ENCODE measurements at regions of chr20 and their contacts with region 1.

Region 1: DNA sequence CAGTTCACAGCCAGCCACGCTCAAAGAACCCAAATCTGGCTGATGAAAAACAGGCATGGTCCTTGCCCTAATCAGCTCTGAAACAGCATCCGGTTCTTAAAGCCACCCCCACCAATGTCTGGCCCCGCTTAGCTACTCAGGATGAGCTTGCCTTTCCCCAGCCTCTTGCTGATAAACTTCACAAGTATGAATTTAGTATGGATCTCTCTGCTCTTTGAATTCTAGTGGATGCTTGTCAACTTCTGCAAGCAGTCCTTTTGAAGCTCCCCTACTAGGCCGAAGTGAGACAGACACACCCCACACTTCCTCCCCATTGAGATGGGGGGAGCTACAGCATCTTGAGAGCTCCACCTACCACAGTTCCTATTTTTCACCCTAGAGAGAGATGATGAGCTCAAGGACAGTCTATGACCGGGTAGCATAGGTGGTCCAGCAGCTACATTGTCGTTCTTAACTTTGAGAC is 36.7 kb downstream of the EBF4 start:
- DNase-seq: peak in 11 of 14 experiments; percentile 25 to 78 (median 38)
- ATAC-seq: peak; percentile 97
- H3K4me3 ChIP-seq: no peak overlapping the region
- H3K4me3 Mint-ChIP-seq: peak overlapping the region; percentile 66
- H3K27ac ChIP-seq: peak overlapping the region; percentile 47 to 53
- H3K27ac Mint-ChIP-seq: peak overlapping the region; percentile 88
- H3K4me1 ChIP-seq: peaks cover 19% of the 10 kb centered on the region
- H3K4me1 Mint-ChIP-seq: peaks cover 33% of the 10 kb centered on the region
- H3K27me3 ChIP-seq: no peaks in the 10 kb centered on the region
- H3K27me3 Mint-ChIP-seq: no peaks in the 10 kb centered on the region
- CTCF ChIP-seq: no peak

Region 2: DNA sequence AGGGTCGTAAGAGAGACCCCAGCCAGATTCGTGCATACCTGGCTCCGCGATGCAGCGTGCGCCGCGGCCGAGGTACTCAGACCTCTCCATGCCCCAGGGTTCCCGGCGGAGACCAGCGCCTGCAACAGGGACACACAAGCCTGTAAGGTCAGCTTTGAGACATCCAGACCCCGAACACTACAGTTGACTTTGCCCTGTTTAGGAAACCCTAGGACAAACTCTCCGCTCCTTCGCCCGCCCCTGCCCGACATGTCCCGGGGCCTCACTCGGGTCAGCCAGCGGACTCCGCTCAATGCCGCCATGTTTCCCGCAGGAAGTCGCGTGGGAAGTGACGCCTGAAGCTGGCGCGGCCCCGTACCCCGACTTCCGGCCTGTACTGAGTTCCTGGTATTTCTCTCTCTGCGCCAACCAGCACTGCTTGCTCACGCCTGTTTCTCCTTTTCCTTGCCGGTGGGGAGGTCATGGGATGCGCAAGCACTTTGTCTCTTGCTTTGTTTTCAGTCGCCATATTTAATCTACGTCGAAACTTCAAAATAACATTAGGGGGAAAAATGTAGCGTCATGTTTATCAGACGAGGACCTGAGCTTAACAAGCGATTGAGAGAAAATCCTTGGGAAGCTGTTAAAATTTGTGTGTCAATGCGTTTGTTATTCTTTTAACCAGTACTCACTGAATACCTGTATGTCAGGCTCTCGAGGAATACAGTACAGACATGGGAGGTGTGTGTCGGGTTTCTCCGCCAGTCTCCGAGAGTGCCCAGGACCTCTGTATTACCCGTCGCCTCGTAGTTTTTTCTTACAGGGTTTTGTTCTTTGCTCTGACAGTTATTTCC is 65.2 kb before region 1 on chr20 and contains the start of gene IDH3B:
- CTCF ChIA-PET with region 1: interaction called, 3 read pairs
- POLR2A ChIA-PET with region 1: interaction called, 11 read pairs
- intact Hi-C with region 1: no loop called
- DNase-seq: peak; percentile 83 to 96 (median 89)
- ATAC-seq: peak; percentile 99
- H3K4me3 ChIP-seq: peak within 1 kb of the TSS; percentile 90
- H3K4me3 Mint-ChIP-seq: peak within 1 kb of the TSS; percentile 94
- H3K27ac ChIP-seq: peak within 1 kb of the TSS; percentile 77 to 96
- H3K27ac Mint-ChIP-seq: peak within 1 kb of the TSS; percentile 91
- H3K4me1 ChIP-seq: peaks cover 18% of the 10 kb centered on the region
- H3K4me1 Mint-ChIP-seq: peaks cover 28% of the 10 kb centered on the region
- H3K27me3 ChIP-seq: no peaks in the 10 kb centered on the region
- H3K27me3 Mint-ChIP-seq: no peaks in the 10 kb centered on the region
- CTCF ChIP-seq: no peak
- total RNA-seq, gene IDH3B: 171 to 181 TPM

Region 3: GRCh38 chr20:2713285-2713684 is 16.0 kb before region 1 on chr20:
- CTCF ChIA-PET with region 1: interaction called, 9 read pairs
- POLR2A ChIA-PET with region 1: interaction called, 14 read pairs
- intact Hi-C with region 1: no loop called
- DNase-seq: peak in 4 of 14 experiments; percentile 18 to 72 (median 66)
- ATAC-seq: peak; percentile 70
- H3K4me3 ChIP-seq: no peak overlapping the region
- H3K4me3 Mint-ChIP-seq: no peak overlapping the region
- H3K27ac ChIP-seq: no peak overlapping the region
- H3K27ac Mint-ChIP-seq: no peak overlapping the region
- H3K4me1 ChIP-seq: peaks cover 5% of the 10 kb centered on the region
- H3K4me1 Mint-ChIP-seq: no peaks in the 10 kb centered on the region
- H3K27me3 ChIP-seq: peaks cover under 1 to 5% of the 10 kb centered on the region in 2 experiments
- H3K27me3 Mint-ChIP-seq: peaks cover 4% of the 10 kb centered on the region
- CTCF ChIP-seq: peak; percentile 80

Region 4: GRCh38 chr20:2742934-2743559 is 13.8 kb after region 1 on chr20:
- CTCF ChIA-PET with region 1: interaction called, 31 read pairs
- POLR2A ChIA-PET with region 1: interaction called, 178 read pairs
- intact Hi-C with region 1: loop called in 1 of 2 experiments (anchors 1 kb)
- DNase-seq: peak; percentile 60 to 88 (median 70)
- ATAC-seq: peak; percentile 54
- H3K4me3 ChIP-seq: no peak overlapping the region
- H3K4me3 Mint-ChIP-seq: peak overlapping the region; percentile 59
- H3K27ac ChIP-seq: peak overlapping the region in 1 of 2 donors; percentile 60
- H3K27ac Mint-ChIP-seq: peak overlapping the region; percentile 90
- H3K4me1 ChIP-seq: peaks cover 47% of the 10 kb centered on the region
- H3K4me1 Mint-ChIP-seq: peaks cover 51% of the 10 kb centered on the region
- H3K27me3 ChIP-seq: no peaks in the 10 kb centered on the region
- H3K27me3 Mint-ChIP-seq: no peaks in the 10 kb centered on the region
- CTCF ChIP-seq: peak; percentile 90

Region 5: GRCh38 chr20:2752567-2753460 is 23.5 kb after region 1 on chr20:
- CTCF ChIA-PET with region 1: interaction called, 16 read pairs
- POLR2A ChIA-PET with region 1: interaction called, 7 read pairs
- intact Hi-C with region 1: no loop called
- DNase-seq: peak in 13 of 14 experiments; percentile 19 to 76 (median 47)
- ATAC-seq: peak; percentile 37
- H3K4me3 ChIP-seq: peak overlapping the region; percentile 60
- H3K4me3 Mint-ChIP-seq: peak overlapping the region; percentile 90
- H3K27ac ChIP-seq: no peak overlapping the region
- H3K27ac Mint-ChIP-seq: no peak overlapping the region
- H3K4me1 ChIP-seq: peaks cover 40% of the 10 kb centered on the region
- H3K4me1 Mint-ChIP-seq: peaks cover 28% of the 10 kb centered on the region
- H3K27me3 ChIP-seq: peaks cover 12 to 13% of the 10 kb centered on the region in 2 experiments
- H3K27me3 Mint-ChIP-seq: peaks cover 17% of the 10 kb centered on the region
- CTCF ChIP-seq: peak; percentile 81

Region 6: DNA sequence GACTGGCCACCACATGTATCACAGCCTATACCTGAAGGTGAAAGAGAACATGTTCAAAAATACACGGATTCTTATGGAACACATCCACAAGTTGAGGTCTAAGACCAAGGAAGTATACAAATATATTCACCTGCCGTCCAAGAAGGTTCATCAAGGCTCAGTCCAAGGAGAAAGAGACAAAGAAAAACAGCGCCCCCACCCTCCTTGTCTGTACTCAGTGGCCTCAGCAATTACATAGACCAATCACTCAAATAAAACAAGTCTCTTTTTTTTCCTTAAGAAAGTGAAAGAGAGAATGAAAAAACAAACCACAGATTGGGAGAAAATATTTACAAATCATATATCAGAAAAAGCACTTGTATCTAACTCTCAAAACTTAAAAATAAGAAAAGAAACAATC is 51.7 kb after region 1 on chr20:
- CTCF ChIA-PET with region 1: no interaction called
- POLR2A ChIA-PET with region 1: no interaction called
- intact Hi-C with region 1: no loop called
- DNase-seq: no peak
- ATAC-seq: no peak
- H3K4me3 ChIP-seq: no peak overlapping the region
- H3K4me3 Mint-ChIP-seq: no peak overlapping the region
- H3K27ac ChIP-seq: no peak overlapping the region
- H3K27ac Mint-ChIP-seq: no peak overlapping the region
- H3K4me1 ChIP-seq: no peaks in the 10 kb centered on the region
- H3K4me1 Mint-ChIP-seq: no peaks in the 10 kb centered on the region
- H3K27me3 ChIP-seq: no peaks in the 10 kb centered on the region
- H3K27me3 Mint-ChIP-seq: peaks cover 32% of the 10 kb centered on the region
- CTCF ChIP-seq: no peak